ENCODE measurements at regions of chr12 and their contacts with region 1.

Region 1: GRCh38 chr12:53159195-53159839 is 21.2 kb upstream of the ZNF740 start:
- DNase-seq: peak; percentile 94
- H3K4me3 ChIP-seq: no peak overlapping the region
- H3K27ac ChIP-seq: no peak overlapping the region
- H3K4me1 ChIP-seq: peaks cover 0 to 10% (median 8%) of the 10 kb centered on the region in 6 donors
- H3K27me3 ChIP-seq: no peaks in the 10 kb centered on the region
- CTCF ChIP-seq: peak; percentile 89 to 99 (median 99)
- POLR2A ChIP-seq: no peak

Region 2: DNA sequence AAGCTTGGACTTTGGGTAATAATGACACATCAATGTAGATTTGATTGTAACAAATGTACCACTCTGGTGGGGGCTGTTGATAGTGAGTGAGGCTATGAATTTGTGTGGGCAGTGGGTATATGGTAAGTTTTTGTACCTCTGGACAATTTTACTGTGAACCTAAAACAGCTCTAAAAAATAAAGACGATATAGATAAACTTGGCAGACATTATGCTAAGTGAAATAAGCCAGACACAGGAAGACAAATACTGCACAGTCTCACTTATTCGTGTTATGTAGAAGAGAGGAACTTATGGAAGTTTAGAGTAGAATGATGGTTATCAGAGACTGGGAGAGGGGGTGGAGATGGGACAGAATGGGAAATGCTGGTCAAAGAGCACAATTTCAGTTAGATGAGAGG is 694.4 kb before region 1 on chr12:
- intact Hi-C with region 1: no loop called
- DNase-seq: no peak
- H3K4me3 ChIP-seq: no peak overlapping the region
- H3K27ac ChIP-seq: no peak overlapping the region
- H3K4me1 ChIP-seq: no peaks in the 10 kb centered on the region
- H3K27me3 ChIP-seq: no peaks in the 10 kb centered on the region
- CTCF ChIP-seq: no peak
- POLR2A ChIP-seq: no peak

Region 3: DNA sequence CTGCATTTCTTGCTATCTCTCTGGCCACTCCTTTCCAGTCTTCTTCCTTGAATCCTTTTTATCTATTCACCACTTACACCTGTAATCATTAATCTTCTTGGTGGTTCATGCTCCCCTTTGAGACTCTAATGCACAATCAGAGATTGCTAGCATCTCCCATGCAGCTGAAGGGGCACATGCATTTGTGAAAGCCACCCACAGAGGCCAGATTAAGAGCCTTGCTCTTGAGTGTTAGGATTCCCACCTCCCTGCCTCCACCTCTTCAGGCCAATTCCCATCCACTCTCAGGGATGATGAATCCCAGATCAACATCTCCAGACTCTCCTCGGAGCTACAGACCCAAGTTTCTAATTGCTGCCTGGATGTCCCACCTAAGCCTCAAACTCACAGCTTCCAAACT is 229.8 kb before region 1 on chr12:
- intact Hi-C with region 1: no loop called
- DNase-seq: no peak
- H3K4me3 ChIP-seq: no peak overlapping the region
- H3K27ac ChIP-seq: no peak overlapping the region
- H3K4me1 ChIP-seq: peaks cover 0 to 22% (median 2%) of the 10 kb centered on the region in 6 donors
- H3K27me3 ChIP-seq: peaks cover 0 to 12% (median 0%) of the 10 kb centered on the region in 7 donors
- CTCF ChIP-seq: no peak
- POLR2A ChIP-seq: no peak

Region 4: DNA sequence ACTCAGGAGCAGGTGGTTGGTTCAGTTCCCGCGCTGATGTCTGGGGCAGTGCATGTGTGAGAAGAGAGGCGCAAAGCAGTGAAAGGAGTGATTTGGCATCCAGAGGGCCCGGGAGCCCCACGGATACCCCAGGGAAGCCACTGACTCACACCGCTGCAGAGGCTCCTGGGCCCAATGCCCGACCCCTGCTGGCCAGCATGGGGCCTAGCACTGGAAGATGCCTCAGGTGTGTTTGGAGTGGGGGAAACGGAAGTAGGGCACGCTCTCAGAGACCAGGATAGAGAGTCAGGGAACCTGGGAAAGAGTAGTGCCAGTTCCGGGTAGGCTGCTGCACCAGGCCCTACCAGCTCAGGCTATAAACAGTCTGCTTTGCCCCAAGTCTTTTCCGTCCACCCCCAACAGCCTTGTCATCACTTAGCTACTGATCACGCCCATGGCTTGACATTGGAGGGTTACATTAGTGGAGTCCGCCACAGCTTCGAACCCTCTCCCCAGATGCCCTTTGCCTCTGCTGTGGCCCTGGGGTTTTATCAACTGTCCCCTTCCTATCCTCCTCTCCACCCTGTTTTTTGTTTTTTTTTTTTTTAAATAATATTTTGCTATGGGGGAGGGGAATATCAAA is 30.9 kb after region 1 on chr12:
- intact Hi-C with region 1: loop called (anchors 5 kb)
- DNase-seq: no peak
- H3K4me3 ChIP-seq: no peak overlapping the region
- H3K27ac ChIP-seq: peak overlapping the region in 3 of 8 donors; percentile 12 to 38 (median 26)
- H3K4me1 ChIP-seq: peaks cover 0 to 48% (median 15%) of the 10 kb centered on the region in 6 donors
- H3K27me3 ChIP-seq: no peaks in the 10 kb centered on the region
- CTCF ChIP-seq: peak; percentile 21 to 73 (median 59)
- POLR2A ChIP-seq: no peak

Measured in spleen (tissue), 13 donors.